ENCODE measurements at regions of chr1 and their contacts with region 1.

Region 1: DNA sequence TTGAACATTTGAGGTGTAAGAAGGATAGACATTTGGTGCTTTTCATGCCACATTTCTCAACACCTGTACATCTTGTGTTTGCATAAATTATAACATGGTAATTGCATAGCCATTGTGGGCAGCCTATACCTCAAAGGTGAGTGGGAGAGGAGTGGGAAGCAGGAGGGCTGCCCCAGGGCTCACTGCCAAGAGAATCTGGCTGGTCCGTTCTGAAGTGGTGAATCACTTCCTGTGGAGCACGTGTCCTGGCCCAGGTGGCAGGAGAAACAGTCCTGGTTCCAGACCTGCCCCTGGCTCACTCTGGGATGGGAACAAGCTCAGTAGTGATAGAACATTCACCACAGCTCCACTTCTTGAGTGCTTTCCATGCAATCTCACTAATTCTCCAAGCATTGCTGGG is 11.6 kb upstream of the OLFML2B start:
- DNase-seq: no peak
- H3K4me3 ChIP-seq: no peak overlapping the region
- H3K27ac ChIP-seq: no peak overlapping the region
- H3K27me3 ChIP-seq: peaks cover 26% of the 10 kb centered on the region
- CTCF ChIP-seq: no peak

Region 2: DNA sequence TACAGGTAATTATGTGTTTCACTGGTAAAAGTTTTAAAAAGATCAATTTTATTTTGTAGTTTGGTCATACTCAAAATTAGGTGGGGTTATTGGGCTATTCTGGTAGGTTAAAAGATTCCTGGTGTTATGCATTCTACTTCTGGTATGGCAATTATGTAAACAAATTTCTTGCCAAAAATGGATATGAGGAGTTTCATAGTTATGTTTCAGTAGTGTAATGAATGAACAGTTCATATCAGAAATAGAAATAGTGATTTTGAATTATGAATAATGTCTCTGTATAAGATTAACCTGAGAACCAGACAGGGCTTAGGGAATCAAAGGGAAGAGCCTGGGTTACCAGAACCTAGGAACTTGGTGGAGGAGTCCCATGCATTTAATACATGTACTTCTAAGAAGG is 253.2 kb before region 1 on chr1:
- CTCF ChIA-PET with region 1: interaction called, 33 read pairs
- POLR2A ChIA-PET with region 1: no interaction called
- DNase-seq: no peak
- H3K4me3 ChIP-seq: no peak overlapping the region
- H3K27ac ChIP-seq: no peak overlapping the region
- H3K27me3 ChIP-seq: no peaks in the 10 kb centered on the region
- CTCF ChIP-seq: no peak

Region 3: GRCh38 chr1:161825831-161826230 is 209.4 kb before region 1 on chr1:
- CTCF ChIA-PET with region 1: interaction called, 17 read pairs
- POLR2A ChIA-PET with region 1: no interaction called
- DNase-seq: no peak
- H3K4me3 ChIP-seq: no peak overlapping the region
- H3K27ac ChIP-seq: no peak overlapping the region
- H3K27me3 ChIP-seq: no peaks in the 10 kb centered on the region
- CTCF ChIP-seq: no peak

Region 4: DNA sequence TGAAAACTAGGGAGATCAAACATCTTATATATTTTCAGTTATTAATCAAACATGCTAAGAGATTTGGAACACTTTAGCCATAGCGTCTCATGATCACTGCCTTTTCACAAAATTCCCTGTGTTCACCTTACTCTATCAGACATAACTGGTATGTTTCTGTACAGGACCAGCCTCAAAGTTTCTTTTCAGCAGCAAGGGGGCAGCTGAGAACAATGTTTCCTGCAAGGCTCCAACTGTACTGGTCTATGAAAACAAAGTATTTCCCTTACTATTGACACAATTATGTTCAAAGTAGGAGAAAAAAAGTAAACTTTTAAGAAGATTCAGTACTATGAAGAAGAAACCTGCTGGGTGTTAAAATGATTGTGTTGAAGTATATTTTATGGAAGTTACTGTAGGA is 170.7 kb before region 1 on chr1:
- CTCF ChIA-PET with region 1: interaction called, 45 read pairs
- POLR2A ChIA-PET with region 1: no interaction called
- DNase-seq: no peak
- H3K4me3 ChIP-seq: no peak overlapping the region
- H3K27ac ChIP-seq: no peak overlapping the region
- H3K27me3 ChIP-seq: no peaks in the 10 kb centered on the region
- CTCF ChIP-seq: peak; percentile 59

Region 5: GRCh38 chr1:162003826-162004208 is 31.4 kb before region 1 on chr1:
- CTCF ChIA-PET with region 1: interaction called, 10 read pairs
- POLR2A ChIA-PET with region 1: no interaction called
- DNase-seq: peak; percentile 61
- H3K4me3 ChIP-seq: no peak overlapping the region
- H3K27ac ChIP-seq: peak overlapping the region; percentile 68
- H3K27me3 ChIP-seq: peaks cover 9% of the 10 kb centered on the region
- CTCF ChIP-seq: no peak

Region 6: GRCh38 chr1:162087111-162087510 is 51.9 kb after region 1 on chr1:
- CTCF ChIA-PET with region 1: no interaction called
- POLR2A ChIA-PET with region 1: no interaction called
- DNase-seq: no peak
- H3K4me3 ChIP-seq: no peak overlapping the region
- H3K27ac ChIP-seq: no peak overlapping the region
- H3K27me3 ChIP-seq: no peaks in the 10 kb centered on the region
- CTCF ChIP-seq: no peak

Measured in AG04450 (cell line).